HCT116 (cell line): ENCODE measurements at regions of chr17 and their contacts with region 1.

Region 1: DNA sequence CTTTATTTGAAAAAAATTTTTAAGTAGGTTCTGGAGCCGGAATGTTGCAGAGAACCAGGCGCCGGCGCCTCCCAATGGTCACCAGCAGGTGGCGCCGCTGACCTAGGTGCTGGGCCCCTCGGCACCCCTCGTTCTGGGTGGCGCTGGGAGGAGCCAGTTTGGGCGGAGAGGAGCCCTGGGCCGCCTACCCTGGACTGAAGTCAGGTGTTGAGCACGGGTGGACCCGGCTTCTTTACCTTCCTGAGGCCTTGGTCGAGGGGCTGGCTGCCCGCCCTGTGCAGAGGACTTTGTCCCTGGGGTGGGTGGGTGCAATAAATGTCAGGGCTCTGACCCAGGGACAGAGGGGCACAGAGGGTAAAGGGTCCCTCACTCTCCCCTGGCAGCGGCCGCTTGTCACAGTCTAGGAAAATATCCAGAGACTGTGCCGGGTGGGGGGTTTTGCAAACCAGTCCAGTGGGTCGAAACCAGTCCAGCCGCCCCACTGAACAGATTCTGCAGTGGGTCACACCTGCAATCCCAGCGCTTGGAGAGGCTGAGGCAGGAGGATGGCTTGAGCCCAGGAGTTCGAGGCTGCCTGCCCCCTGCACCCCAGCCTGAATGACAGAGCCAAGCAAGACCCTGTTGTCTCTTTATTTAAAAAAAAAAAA is 30.1 kb upstream of the TNFRSF13B start:
- DNase-seq: peak; percentile 51
- ATAC-seq: peak; percentile 96
- H3K4me3 ChIP-seq: no peak overlapping the region
- H3K27ac ChIP-seq: no peak overlapping the region
- H3K4me1 ChIP-seq: peaks cover 0 to 9% of the 10 kb centered on the region in 2 experiments; a peak in 3 of 4 replicates
- H3K27me3 ChIP-seq: no peaks in the 10 kb centered on the region
- CTCF ChIP-seq: peak; percentile 91 to 97 (median 97)
- POLR2A ChIP-seq: no peak
- RAD21 ChIP-seq: peak; percentile 99

Region 2: DNA sequence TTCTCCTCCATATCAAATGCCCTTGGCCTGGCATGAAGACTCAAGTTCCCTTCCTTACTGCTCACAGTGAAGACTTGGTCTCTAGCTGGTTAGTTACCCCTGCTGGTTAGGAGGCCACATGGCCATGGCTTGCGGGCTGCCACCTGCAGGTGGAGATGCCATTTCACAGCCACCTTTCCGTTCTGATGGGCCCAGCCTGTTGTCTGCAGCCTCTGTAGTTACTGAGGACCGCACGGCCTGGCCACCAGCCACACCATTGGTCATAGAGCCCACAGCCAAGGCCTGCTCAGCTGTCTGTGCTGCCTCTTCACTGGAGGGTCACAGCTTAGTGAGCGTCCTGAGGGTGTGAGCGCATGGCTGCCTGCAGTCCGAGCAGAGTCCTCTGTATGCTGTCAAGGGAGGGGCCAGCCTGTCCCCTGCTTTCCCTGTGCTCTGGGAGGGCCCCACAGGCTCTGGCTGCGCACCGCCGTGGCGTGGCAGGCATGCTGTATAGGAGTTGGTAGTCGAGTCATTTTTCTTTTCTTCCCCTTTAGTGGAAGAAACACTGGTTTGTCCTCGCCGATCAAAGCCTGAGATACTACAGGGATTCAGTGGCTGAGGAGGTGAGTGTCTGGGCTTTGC is 144.9 kb after region 1 on chr17:
- CTCF ChIA-PET with region 1: no interaction called
- POLR2A ChIA-PET with region 1: no interaction called
- RAD21 ChIA-PET with region 1: no interaction called
- intact Hi-C with region 1: loop called (anchors 2 kb)
- DNase-seq: peak; percentile 15
- ATAC-seq: peak; percentile 82
- H3K4me3 ChIP-seq: no peak overlapping the region
- H3K27ac ChIP-seq: no peak overlapping the region; the same call in 1 of the 2 replicates
- H3K4me1 ChIP-seq: peaks cover 2 to 21% of the 10 kb centered on the region in 2 experiments; a peak in 2 of 4 replicates
- H3K27me3 ChIP-seq: no peaks in the 10 kb centered on the region
- CTCF ChIP-seq: peak; percentile 59 to 63 (median 62); a peak in 5 of 6 replicates
- POLR2A ChIP-seq: no peak
- RAD21 ChIP-seq: peak; percentile 44

Region 3: GRCh38 chr17:17313350-17313991 is 311.5 kb after region 1 on chr17:
- CTCF ChIA-PET with region 1: no interaction called
- POLR2A ChIA-PET with region 1: no interaction called
- RAD21 ChIA-PET with region 1: no interaction called
- intact Hi-C with region 1: loop called (anchors 2 kb)
- DNase-seq: peak; percentile 31
- ATAC-seq: peak; percentile 99
- H3K4me3 ChIP-seq: no peak overlapping the region
- H3K27ac ChIP-seq: no peak overlapping the region
- H3K4me1 ChIP-seq: peaks cover 0 to 7% of the 10 kb centered on the region in 2 experiments; a peak in 1 of 4 replicates
- H3K27me3 ChIP-seq: no peaks in the 10 kb centered on the region
- CTCF ChIP-seq: peak; percentile 61 to 75 (median 73); a peak in 5 of 6 replicates
- POLR2A ChIP-seq: no peak
- RAD21 ChIP-seq: peak; percentile 88

Region 4: GRCh38 chr17:17568749-17569195 is 566.8 kb after region 1 on chr17:
- CTCF ChIA-PET with region 1: no interaction called
- POLR2A ChIA-PET with region 1: no interaction called
- RAD21 ChIA-PET with region 1: no interaction called
- intact Hi-C with region 1: loop called (anchors 5 kb)
- DNase-seq: peak; percentile 10
- ATAC-seq: peak; percentile 89
- H3K4me3 ChIP-seq: no peak overlapping the region
- H3K27ac ChIP-seq: no peak overlapping the region
- H3K4me1 ChIP-seq: no peaks in the 10 kb centered on the region
- H3K27me3 ChIP-seq: no peaks in the 10 kb centered on the region
- CTCF ChIP-seq: peak; percentile 74 to 94 (median 86); a peak in 5 of 6 replicates
- POLR2A ChIP-seq: no peak
- RAD21 ChIP-seq: peak; percentile 79

Region 5: DNA sequence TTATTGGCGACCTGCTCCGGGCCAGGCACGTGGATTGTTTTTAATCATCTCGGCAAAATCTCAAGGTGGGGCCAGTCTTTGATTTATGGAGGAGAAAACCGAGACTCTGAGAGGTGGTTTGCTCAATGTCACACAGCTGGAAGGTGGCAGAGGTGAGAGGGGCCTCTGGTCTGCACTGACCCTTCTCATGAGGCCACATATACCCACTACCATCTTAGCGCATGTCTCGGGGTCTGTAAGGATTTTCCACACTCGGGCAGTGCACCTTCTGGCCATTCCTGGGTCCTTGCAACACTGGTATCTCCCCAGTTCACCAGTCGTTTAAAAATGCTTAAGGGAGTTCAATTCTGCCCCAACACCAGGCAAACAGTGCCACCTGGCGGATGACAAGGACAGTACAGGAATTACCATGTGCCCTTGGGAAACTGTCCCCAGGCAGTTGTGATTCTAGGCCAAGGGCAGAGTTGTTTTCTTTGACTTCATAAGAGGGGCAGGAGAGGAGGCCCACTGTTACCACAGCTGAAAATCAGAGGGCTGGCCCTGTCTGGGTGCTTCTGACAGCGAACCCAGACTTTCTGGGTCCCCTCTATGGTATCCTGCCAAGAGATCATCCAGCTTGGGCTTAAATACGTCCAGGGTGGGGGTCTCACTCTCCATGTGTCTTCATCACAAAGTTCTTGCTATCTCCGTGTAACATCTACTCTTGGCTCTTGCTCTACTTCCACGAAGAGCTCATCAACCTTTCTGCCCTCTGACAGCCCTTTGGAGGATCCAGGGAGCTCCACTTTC is 639.8 kb after region 1 on chr17:
- CTCF ChIA-PET with region 1: no interaction called
- POLR2A ChIA-PET with region 1: no interaction called
- RAD21 ChIA-PET with region 1: no interaction called
- intact Hi-C with region 1: loop called (anchors 10 kb)
- DNase-seq: peak; percentile 73
- ATAC-seq: peak; percentile 98
- H3K4me3 ChIP-seq: no peak overlapping the region
- H3K27ac ChIP-seq: no peak overlapping the region
- H3K4me1 ChIP-seq: peaks cover 0 to 5% of the 10 kb centered on the region in 2 experiments; a peak in 1 of 4 replicates
- H3K27me3 ChIP-seq: no peaks in the 10 kb centered on the region
- CTCF ChIP-seq: peak; percentile 83 to 93 (median 92)
- POLR2A ChIP-seq: no peak
- RAD21 ChIP-seq: peak; percentile 99